ENCODE measurements at regions of chr9 and their contacts with region 1.

Region 1: DNA sequence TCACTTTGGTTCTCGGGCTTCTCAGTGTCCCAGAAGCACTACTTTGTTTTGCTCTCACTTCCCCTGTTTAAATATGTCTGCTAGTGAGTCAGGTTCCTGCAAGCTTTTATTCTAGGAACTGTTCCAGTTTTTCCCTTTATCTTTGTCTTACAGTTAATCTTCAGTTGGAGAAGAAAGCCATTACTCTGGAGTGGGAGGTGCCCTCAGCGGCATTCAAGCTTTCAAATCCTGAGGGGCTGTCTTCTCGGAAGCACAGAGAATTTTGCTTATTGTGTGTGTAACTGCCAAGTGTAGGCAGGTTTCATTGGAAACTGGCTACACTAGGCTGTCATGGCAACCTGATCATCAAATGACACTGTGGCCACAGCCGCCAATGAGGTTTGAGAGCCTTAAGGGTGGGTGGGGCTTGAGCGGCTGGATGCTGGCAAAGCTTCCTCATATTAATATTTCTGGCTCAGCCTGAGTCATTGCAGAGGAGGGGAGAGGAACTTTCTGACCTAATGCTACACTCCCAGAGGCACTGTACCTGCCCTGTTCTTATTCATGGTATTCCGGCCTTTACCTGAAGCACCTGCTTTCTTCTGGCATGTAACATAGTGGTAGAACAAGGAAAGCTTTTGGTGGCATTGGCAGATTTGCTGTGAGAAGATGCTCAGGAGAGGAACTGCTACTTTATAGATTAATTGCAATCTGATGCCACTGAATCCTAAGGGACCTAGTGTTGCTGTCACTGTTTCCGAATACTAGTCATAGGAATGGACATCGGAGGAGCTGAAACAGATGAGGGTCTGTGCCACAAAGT is 26.3 kb downstream of the SLC25A25 start:
- DNase-seq: peak in 7 of 9 experiments; percentile 38 to 82 (median 62)
- ATAC-seq: peak; percentile 60
- H3K4me3 ChIP-seq: no peak overlapping the region
- H3K4me3 Mint-ChIP-seq: peak overlapping the region; percentile 66
- H3K27ac ChIP-seq: peak overlapping the region; percentile 57 to 74
- H3K27ac Mint-ChIP-seq: peak overlapping the region; percentile 93
- H3K4me1 ChIP-seq: peaks cover 75% of the 10 kb centered on the region
- H3K4me1 Mint-ChIP-seq: peaks cover 80% of the 10 kb centered on the region
- H3K27me3 ChIP-seq: no peaks in the 10 kb centered on the region
- H3K27me3 Mint-ChIP-seq: no peaks in the 10 kb centered on the region
- CTCF ChIP-seq: no peak

Region 2: DNA sequence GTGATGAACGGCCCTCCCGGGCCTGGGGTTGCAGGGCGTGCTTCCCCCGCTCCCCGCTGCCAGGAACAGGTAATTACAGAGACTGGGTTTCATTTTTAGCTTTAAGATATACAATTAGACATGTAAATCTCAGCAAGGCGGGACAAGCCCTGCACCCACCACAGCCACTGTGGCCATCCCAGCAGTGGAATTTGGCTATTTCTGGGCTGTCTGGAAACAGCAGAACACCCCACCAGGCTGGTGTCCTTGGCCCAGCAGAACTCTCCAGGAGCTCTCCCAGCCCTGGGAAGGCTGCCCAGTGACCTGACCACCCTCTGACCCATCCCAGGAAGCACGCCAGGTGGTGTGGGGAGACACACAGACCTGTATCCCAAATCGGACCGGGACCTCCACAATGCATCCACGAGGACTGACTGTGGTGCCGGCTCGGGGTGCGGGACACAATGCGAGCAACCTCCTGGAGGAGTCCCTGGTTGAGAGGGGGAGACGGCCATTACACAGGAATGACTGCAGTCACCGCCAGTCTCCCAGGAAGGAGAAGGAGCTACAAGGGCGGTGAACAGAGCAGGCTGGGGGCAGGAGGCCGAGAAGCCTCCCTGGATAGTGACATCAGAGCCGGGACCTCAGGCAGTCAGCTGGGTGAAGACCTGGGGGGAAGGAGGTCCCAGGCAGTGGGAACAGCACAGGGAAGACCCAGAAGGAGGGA is 130.9 kb before region 1 on chr9:
- CTCF ChIA-PET with region 1: interaction called, 15 read pairs
- POLR2A ChIA-PET with region 1: no interaction called
- intact Hi-C with region 1: no loop called
- DNase-seq: peak in 1 of 9 experiments; percentile 50
- ATAC-seq: peak; percentile 12
- H3K4me3 ChIP-seq: peak overlapping the region in 1 of 2 experiments; percentile 42
- H3K4me3 Mint-ChIP-seq: peak overlapping the region; percentile 88
- H3K27ac ChIP-seq: peak overlapping the region; percentile 25 to 49
- H3K27ac Mint-ChIP-seq: peak overlapping the region; percentile 99
- H3K4me1 ChIP-seq: peaks cover 100% of the 10 kb centered on the region
- H3K4me1 Mint-ChIP-seq: peaks cover 96% of the 10 kb centered on the region
- H3K27me3 ChIP-seq: no peaks in the 10 kb centered on the region
- H3K27me3 Mint-ChIP-seq: no peaks in the 10 kb centered on the region
- CTCF ChIP-seq: no peak

Region 3: DNA sequence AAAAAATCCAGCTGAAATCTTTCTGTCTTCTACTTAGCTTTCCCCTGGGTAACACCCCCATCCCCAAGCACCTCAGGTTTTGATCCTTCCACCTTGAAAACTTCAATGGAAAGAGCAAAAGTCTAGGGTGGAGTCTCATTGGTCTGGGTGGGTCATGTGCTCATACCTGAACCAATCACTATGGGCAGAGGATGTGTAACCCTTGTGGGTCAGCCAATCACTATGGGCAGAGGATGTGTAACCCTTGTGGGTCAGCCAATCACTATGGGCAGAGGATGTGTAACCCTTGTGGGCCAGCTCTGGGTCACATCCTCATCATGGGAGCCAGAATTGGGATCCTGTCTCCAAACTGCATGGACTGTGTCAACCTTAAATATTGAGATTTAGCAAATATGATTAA is 45.7 kb before region 1 on chr9:
- CTCF ChIA-PET with region 1: interaction called, 10 read pairs
- POLR2A ChIA-PET with region 1: no interaction called
- intact Hi-C with region 1: loop called in 1 of 2 experiments (anchors 5 kb)
- DNase-seq: no peak
- ATAC-seq: peak; percentile 56
- H3K4me3 ChIP-seq: no peak overlapping the region
- H3K4me3 Mint-ChIP-seq: no peak overlapping the region
- H3K27ac ChIP-seq: no peak overlapping the region
- H3K27ac Mint-ChIP-seq: no peak overlapping the region
- H3K4me1 ChIP-seq: no peaks in the 10 kb centered on the region
- H3K4me1 Mint-ChIP-seq: no peaks in the 10 kb centered on the region
- H3K27me3 ChIP-seq: no peaks in the 10 kb centered on the region
- H3K27me3 Mint-ChIP-seq: no peaks in the 10 kb centered on the region
- CTCF ChIP-seq: no peak

Region 4: GRCh38 chr9:128055344-128056040 is 38.9 kb before region 1 on chr9:
- CTCF ChIA-PET with region 1: no interaction called
- POLR2A ChIA-PET with region 1: no interaction called
- intact Hi-C with region 1: loop called in 1 of 2 experiments (anchors 5 kb)
- DNase-seq: no peak
- ATAC-seq: no peak
- H3K4me3 ChIP-seq: no peak overlapping the region
- H3K4me3 Mint-ChIP-seq: no peak overlapping the region
- H3K27ac ChIP-seq: no peak overlapping the region
- H3K27ac Mint-ChIP-seq: no peak overlapping the region
- H3K4me1 ChIP-seq: peaks cover 4% of the 10 kb centered on the region
- H3K4me1 Mint-ChIP-seq: no peaks in the 10 kb centered on the region
- H3K27me3 ChIP-seq: no peaks in the 10 kb centered on the region
- H3K27me3 Mint-ChIP-seq: no peaks in the 10 kb centered on the region
- CTCF ChIP-seq: no peak